SK-N-SH (cell line): ENCODE measurements at regions of chrX and their contacts with region 1.

Region 1: GRCh38 chrX:131841496-131842410 is 181.3 kb upstream of the STK26 start:
- DNase-seq: peak; percentile 81
- H3K4me3 ChIP-seq: peak overlapping the region in 1 of 2 experiments; percentile 24; a peak in 1 of 4 replicates
- H3K27ac ChIP-seq: no peak overlapping the region
- H3K4me1 ChIP-seq: peaks cover 0 to 3% of the 10 kb centered on the region in 2 experiments; a peak in 1 of 4 replicates
- H3K27me3 ChIP-seq: peaks cover 11% of the 10 kb centered on the region; the same call in 1 of the 2 replicates
- CTCF ChIP-seq: peak; percentile 92
- EP300 ChIP-seq: no peak
- RAD21 ChIP-seq: peak; percentile 90

Region 2: DNA sequence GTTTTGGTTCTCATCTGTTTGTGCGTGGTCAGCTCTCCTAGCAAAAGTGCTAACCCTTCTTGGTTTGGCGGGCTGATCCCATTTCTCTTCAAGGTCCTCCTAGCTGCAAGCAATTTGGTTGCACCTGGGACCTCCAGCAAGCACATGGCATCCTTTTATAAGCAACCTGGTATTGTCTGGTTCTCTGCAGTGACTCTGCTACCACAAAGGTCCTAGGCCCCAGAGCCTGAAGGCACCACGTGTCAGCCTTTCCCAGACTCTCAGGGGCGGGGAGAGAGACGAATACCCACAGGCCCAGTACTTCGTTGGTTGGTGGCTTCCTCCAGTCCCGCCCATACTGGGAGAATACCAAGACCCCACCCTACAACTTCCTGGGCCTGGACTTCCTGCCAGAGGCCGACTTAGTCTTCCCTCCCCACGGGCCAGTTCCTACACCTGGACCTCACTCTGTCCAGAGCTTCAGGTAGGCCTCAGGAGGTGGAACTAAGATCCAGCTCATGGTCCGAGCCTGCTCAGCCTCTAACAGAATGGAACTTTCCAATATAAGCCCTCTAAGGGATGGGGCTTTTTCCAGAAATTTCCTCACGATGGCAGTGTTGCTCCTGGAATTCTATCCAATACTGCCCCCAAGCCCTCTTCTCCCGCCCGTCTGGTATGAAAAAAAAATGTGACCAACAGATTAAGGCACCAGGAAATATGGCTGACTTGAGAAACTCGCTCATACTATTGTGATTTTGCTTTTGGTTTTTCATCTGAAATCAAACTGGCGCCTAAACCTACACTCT is 11.2 kb before region 1 on chrX:
- CTCF ChIA-PET with region 1: interaction called, 20 read pairs
- POLR2A ChIA-PET with region 1: no interaction called
- DNase-seq: peak; percentile 56
- H3K4me3 ChIP-seq: peak overlapping the region; percentile 35 to 41
- H3K27ac ChIP-seq: no peak overlapping the region
- H3K4me1 ChIP-seq: peaks cover 0 to 4% of the 10 kb centered on the region in 2 experiments; a peak in 1 of 4 replicates
- H3K27me3 ChIP-seq: no peaks in the 10 kb centered on the region
- CTCF ChIP-seq: peak; percentile 86
- EP300 ChIP-seq: no peak
- RAD21 ChIP-seq: peak; percentile 86

Region 3: DNA sequence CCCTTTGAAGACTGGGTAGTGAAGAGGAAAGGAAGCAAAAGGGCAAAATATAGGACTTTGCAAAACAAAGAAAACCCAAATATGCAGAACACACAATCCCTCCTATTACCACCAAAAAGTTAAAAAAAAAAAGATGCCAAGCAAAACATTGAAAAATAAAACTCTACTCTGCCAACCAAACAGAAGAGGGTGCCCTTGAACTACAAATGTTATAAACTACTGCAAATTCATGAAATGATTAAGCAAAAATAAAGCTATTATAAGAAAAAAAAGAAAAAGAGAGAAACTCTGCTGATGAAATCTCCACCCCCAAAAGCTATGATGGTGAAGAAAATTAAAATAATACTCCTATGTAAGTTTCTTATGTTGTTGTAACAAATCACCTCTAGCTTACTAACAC is 12.8 kb after region 1 on chrX:
- CTCF ChIA-PET with region 1: interaction called, 27 read pairs
- POLR2A ChIA-PET with region 1: no interaction called
- DNase-seq: no peak
- H3K4me3 ChIP-seq: no peak overlapping the region
- H3K27ac ChIP-seq: no peak overlapping the region
- H3K4me1 ChIP-seq: no peaks in the 10 kb centered on the region
- H3K27me3 ChIP-seq: peaks cover 16% of the 10 kb centered on the region
- CTCF ChIP-seq: peak; percentile 53
- EP300 ChIP-seq: no peak
- RAD21 ChIP-seq: peak; percentile 67

Region 4: GRCh38 chrX:132071260-132071659 is 229.5 kb after region 1 on chrX:
- CTCF ChIA-PET with region 1: interaction called, 23 read pairs
- POLR2A ChIA-PET with region 1: no interaction called
- DNase-seq: peak; percentile 10
- H3K4me3 ChIP-seq: no peak overlapping the region
- H3K27ac ChIP-seq: no peak overlapping the region
- H3K4me1 ChIP-seq: no peaks in the 10 kb centered on the region
- H3K27me3 ChIP-seq: no peaks in the 10 kb centered on the region; the same call in none of the 2 replicates
- CTCF ChIP-seq: peak; percentile 61
- EP300 ChIP-seq: no peak
- RAD21 ChIP-seq: peak; percentile 67

Region 5: GRCh38 chrX:132219343-132219768 is 377.6 kb after region 1 on chrX and contains the start of gene RAP2C:
- CTCF ChIA-PET with region 1: interaction called, 14 read pairs
- POLR2A ChIA-PET with region 1: no interaction called
- DNase-seq: peak; percentile 74
- H3K4me3 ChIP-seq: peak within 1 kb of the TSS; percentile 74 to 81
- H3K27ac ChIP-seq: peak within 1 kb of the TSS; percentile 68 to 83
- H3K4me1 ChIP-seq: peaks cover 0 to 5% of the 10 kb centered on the region in 2 experiments; a peak in 2 of 4 replicates
- H3K27me3 ChIP-seq: no peaks in the 10 kb centered on the region
- CTCF ChIP-seq: peak; percentile 74
- EP300 ChIP-seq: no peak
- RAD21 ChIP-seq: peak; percentile 66
- polyA plus RNA-seq, gene RAP2C: 5.5 and 6.8 TPM in 2 replicates